GM23248 (cell line): ENCODE measurements at regions of chr17 and their contacts with region 1.

Region 1: GRCh38 chr17:46212634-46213435 is 19.6 kb upstream of the KANSL1 start:
- DNase-seq: peak; percentile 93
- H3K4me3 ChIP-seq: no peak overlapping the region
- H3K27ac ChIP-seq: no peak overlapping the region
- H3K4me1 ChIP-seq: 0 out of 2 replicates have a peak, but pooled peaks cover 3% of the 10 kb centered on the region
- H3K27me3 ChIP-seq: no peaks in the 10 kb centered on the region

Region 2: DNA sequence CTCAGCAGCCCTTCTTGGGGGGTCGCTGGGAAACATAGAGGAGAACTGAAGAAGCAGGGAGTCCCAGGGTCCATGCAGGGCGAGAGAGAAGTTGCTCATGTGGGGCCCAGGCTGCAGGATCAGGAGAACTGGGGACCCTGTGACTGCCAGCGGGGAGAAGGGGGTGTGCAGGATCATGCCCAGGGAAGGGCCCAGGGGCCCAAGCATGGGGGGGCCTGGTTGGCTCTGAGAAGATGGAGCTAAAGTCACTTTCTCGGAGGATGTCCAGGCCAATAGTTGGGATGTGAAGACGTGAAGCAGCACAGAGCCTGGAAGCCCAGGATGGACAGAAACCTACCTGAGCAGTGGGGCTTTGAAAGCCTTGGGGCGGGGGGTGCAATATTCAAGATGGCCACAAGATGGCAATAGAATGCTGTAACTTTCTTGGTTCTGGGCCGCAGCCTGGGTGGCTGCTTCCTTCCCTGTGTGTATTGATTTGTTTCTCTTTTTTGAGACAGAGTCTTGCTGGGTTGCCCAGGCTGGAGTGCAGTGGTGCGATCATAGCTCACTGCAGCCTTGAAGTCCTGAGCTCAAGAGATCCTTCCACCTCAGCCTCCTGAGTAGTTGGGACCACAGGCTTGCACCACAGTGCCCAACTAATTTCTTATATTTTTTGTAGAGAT is 210.4 kb before region 1 on chr17:
- in situ Hi-C with region 1: loop called (anchors 10 kb)
- DNase-seq: peak; percentile 70
- H3K4me3 ChIP-seq: no peak overlapping the region
- H3K27ac ChIP-seq: no peak overlapping the region
- H3K4me1 ChIP-seq: no peaks in the 10 kb centered on the region
- H3K27me3 ChIP-seq: no peaks in the 10 kb centered on the region

Region 3: GRCh38 chr17:46035112-46035818 is 177.6 kb before region 1 on chr17:
- in situ Hi-C with region 1: loop called (anchors 10 kb)
- DNase-seq: no peak
- H3K4me3 ChIP-seq: no peak overlapping the region
- H3K27ac ChIP-seq: no peak overlapping the region
- H3K4me1 ChIP-seq: no peaks in the 10 kb centered on the region
- H3K27me3 ChIP-seq: no peaks in the 10 kb centered on the region